Colonic mucosa (tissue), 4 donors: ENCODE measurements at regions of chr5 and their contacts with region 1.

Region 1: DNA sequence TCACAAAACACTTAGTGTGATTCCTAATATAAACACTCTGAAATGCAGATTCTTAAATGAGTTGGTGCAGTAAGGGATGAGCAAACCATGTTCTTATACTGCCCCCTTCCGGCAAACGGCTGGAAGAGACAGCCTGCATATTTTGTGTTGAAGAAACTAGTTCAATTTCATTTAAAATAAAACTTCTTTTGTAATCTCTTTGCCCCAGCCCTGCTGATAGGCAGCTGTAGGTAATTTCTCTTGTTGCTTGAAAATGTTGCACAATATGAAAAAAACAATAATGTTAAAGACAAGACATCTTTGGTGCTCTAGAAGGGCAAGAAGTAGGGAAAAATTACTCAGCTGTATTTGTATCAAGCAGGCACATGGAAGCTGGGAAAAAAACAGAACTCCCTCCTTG is 89.7 kb upstream of the CCNG1 start:
- DNase-seq: peak; percentile 72
- H3K4me3 ChIP-seq: no peak overlapping the region
- H3K27ac ChIP-seq: no peak overlapping the region
- H3K4me1 ChIP-seq: no peaks in the 10 kb centered on the region
- H3K27me3 ChIP-seq: no peaks in the 10 kb centered on the region
- CTCF ChIP-seq: peak; percentile 63

Region 2: DNA sequence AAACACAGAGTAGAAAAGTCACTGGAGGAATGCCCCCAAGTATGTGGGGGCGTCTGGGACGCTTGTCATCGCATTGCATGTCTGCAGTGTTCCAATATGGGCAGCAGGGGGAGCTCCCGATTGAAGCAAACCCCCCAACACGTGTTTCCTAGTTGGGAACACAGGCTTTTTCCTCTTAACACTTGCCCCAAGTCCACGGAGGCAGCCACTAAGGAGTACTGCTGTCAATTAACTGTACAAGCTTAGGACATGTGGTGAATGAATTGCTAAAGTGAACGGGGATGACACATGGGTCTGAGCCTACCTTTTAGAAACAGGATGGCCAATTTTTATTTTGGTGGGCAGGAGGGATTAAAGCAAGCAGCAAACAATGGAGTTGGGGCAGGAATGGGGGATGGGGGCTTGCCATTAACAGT is 1803.3 kb before region 1 on chr5:
- intact Hi-C with region 1: loop called (anchors 10 kb)
- DNase-seq: peak; percentile 52
- H3K4me3 ChIP-seq: no peak overlapping the region
- H3K27ac ChIP-seq: no peak overlapping the region
- H3K4me1 ChIP-seq: no peaks in the 10 kb centered on the region
- H3K27me3 ChIP-seq: peaks cover 10% of the 10 kb centered on the region
- CTCF ChIP-seq: peak; percentile 64

Region 3: GRCh38 chr5:162573758-162574157 is 773.9 kb before region 1 on chr5:
- intact Hi-C with region 1: no loop called
- DNase-seq: no peak
- H3K4me3 ChIP-seq: no peak overlapping the region
- H3K27ac ChIP-seq: no peak overlapping the region
- H3K4me1 ChIP-seq: no peaks in the 10 kb centered on the region
- H3K27me3 ChIP-seq: no peaks in the 10 kb centered on the region
- CTCF ChIP-seq: no peak

Region 4: GRCh38 chr5:163269624-163270023 is 78.0 kb before region 1 on chr5:
- intact Hi-C with region 1: no loop called
- DNase-seq: no peak
- H3K4me3 ChIP-seq: no peak overlapping the region
- H3K27ac ChIP-seq: no peak overlapping the region
- H3K4me1 ChIP-seq: no peaks in the 10 kb centered on the region
- H3K27me3 ChIP-seq: no peaks in the 10 kb centered on the region
- CTCF ChIP-seq: no peak

Region 5: GRCh38 chr5:163861670-163862069 is 514.0 kb after region 1 on chr5:
- intact Hi-C with region 1: no loop called
- DNase-seq: no peak
- H3K4me3 ChIP-seq: no peak overlapping the region
- H3K27ac ChIP-seq: no peak overlapping the region
- H3K4me1 ChIP-seq: no peaks in the 10 kb centered on the region
- H3K27me3 ChIP-seq: no peaks in the 10 kb centered on the region
- CTCF ChIP-seq: no peak

Region 6: GRCh38 chr5:164041105-164041504 is 693.4 kb after region 1 on chr5:
- intact Hi-C with region 1: no loop called
- DNase-seq: no peak
- H3K4me3 ChIP-seq: no peak overlapping the region
- H3K27ac ChIP-seq: no peak overlapping the region
- H3K4me1 ChIP-seq: no peaks in the 10 kb centered on the region
- H3K27me3 ChIP-seq: no peaks in the 10 kb centered on the region
- CTCF ChIP-seq: no peak